ENCODE measurements at regions of chr15 and their contacts with region 1.

Region 1: DNA sequence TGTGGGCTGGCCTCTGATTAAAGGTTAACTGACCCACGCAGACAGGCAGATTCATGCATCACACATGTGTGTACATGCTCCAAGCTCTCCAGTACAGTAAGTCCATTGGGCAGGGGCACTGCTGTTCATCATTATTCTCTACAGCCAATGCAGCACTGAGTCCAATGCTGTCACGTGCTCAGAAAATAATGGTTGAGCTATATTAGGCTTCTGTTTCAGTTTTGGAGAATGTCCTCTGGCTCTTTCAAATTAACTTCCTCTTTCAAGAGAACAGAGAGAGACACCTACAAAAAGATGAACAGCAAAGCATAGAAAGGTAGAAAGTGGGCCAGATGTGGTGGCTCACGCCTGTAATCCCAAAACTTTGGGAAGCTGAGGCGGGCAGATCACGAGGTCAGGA is 202.6 kb downstream of the MEX3B start:
- DNase-seq: no peak
- ATAC-seq: no peak
- H3K4me3 ChIP-seq: no peak overlapping the region
- H3K27ac ChIP-seq: no peak overlapping the region
- H3K4me1 ChIP-seq: no peaks in the 10 kb centered on the region
- H3K27me3 ChIP-seq: no peaks in the 10 kb centered on the region

Region 2: GRCh38 chr15:81531109-81531592 is 312.1 kb before region 1 on chr15:
- intact Hi-C with region 1: no loop called
- DNase-seq: peak; percentile 20 to 64 (median 48)
- ATAC-seq: peak; percentile 56 to 93
- H3K4me3 ChIP-seq: no peak overlapping the region
- H3K27ac ChIP-seq: no peak overlapping the region
- H3K4me1 ChIP-seq: no peaks in the 10 kb centered on the region
- H3K27me3 ChIP-seq: no peaks in the 10 kb centered on the region

Region 3: DNA sequence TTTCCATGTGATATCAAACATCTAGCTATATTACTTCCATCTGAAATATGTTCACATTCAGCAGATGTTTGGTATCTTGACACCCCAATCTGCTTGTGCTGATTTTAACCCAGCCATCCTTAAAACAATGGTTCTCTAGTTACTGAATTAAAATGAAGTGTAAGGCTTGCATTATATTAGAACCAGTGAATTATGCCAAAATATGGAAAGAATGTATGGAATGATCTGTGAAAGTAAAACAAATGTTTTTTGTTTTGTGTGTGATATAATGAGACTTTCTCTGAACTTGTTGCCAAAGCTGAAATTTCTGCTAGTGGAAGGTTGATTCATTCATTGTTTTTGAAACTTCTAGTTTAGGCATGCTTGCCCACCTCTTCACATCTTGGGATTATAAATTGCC is 114.5 kb before region 1 on chr15:
- intact Hi-C with region 1: no loop called
- DNase-seq: no peak
- ATAC-seq: no peak
- H3K4me3 ChIP-seq: no peak overlapping the region
- H3K27ac ChIP-seq: no peak overlapping the region
- H3K4me1 ChIP-seq: no peaks in the 10 kb centered on the region
- H3K27me3 ChIP-seq: no peaks in the 10 kb centered on the region

Region 4: DNA sequence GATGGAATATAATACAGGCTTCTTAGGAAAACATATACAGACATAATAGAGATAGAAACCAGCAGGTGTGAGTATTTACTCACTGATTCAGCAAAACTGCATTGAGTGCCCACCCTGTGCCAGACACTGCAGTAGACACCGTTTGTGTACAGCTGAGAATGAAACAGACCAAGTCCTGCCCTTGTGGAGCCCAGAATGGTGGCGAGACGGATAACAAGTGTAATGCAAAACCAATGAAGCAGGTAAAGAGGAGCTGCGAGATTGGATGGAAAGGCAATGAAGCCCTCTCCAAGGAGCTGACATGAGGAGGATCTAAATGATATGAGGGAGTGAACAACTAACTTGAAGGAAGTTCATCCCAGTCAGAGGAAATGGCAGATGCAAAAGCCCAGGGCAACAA is 53.8 kb before region 1 on chr15:
- intact Hi-C with region 1: loop called in 1 of 4 experiments (anchors 10 kb)
- DNase-seq: no peak
- ATAC-seq: no peak
- H3K4me3 ChIP-seq: no peak overlapping the region
- H3K27ac ChIP-seq: no peak overlapping the region
- H3K4me1 ChIP-seq: no peaks in the 10 kb centered on the region
- H3K27me3 ChIP-seq: no peaks in the 10 kb centered on the region

Region 5: GRCh38 chr15:81897057-81897677 is 53.9 kb after region 1 on chr15:
- intact Hi-C with region 1: no loop called
- DNase-seq: no peak
- ATAC-seq: no peak
- H3K4me3 ChIP-seq: no peak overlapping the region
- H3K27ac ChIP-seq: no peak overlapping the region
- H3K4me1 ChIP-seq: no peaks in the 10 kb centered on the region
- H3K27me3 ChIP-seq: no peaks in the 10 kb centered on the region